ENCODE measurements at regions of chr17 and their contacts with region 1.

Region 1: DNA sequence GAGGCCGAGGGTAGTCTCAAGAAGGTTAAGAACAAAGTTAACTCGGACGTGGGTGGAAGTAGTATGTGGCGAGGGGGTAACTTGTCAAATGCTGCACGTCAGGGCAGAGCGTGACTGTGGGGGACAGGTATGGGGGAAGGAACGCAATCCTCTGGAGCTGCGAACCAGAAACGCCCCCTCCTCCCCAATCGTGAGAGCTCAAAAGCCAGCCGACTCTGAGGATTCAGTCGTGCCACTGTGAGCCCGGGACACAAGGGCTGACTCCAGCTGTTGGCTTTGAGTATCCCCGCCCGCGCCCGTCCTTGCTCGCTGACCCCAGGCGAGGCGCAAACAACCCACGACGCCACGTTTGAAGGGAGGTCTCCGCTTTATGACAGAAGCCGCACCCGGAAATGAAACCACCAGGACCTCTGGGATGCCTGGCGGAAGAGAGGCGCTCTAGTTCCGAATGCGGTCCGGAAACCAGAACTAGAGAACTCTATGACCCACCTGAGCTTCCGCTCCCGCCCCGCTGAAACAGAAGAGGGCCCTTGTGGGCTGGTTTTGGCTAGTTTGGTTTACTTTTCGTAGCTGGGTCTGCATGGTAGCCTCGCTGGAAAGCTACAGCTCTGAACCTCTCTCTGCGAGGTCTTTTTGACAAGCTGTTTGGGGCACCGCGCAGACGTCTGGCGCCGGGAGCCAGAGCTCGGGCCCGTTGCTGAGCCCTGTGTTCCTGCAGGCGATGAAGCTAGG is at the start of gene PEX12:
- DNase-seq: peak; percentile 61 to 73
- H3K4me3 ChIP-seq: peak within 1 kb of the TSS; percentile 67
- H3K27ac ChIP-seq: peak within 1 kb of the TSS; percentile 45; the same call in 1 of the 2 replicates
- H3K4me1 ChIP-seq: peaks cover 15% of the 10 kb centered on the region
- H3K27me3 ChIP-seq: no peaks in the 10 kb centered on the region
- CTCF ChIP-seq: no peak
- total RNA-seq, gene PEX12: 4.7 and 5.8 TPM in 2 replicates

Region 2: DNA sequence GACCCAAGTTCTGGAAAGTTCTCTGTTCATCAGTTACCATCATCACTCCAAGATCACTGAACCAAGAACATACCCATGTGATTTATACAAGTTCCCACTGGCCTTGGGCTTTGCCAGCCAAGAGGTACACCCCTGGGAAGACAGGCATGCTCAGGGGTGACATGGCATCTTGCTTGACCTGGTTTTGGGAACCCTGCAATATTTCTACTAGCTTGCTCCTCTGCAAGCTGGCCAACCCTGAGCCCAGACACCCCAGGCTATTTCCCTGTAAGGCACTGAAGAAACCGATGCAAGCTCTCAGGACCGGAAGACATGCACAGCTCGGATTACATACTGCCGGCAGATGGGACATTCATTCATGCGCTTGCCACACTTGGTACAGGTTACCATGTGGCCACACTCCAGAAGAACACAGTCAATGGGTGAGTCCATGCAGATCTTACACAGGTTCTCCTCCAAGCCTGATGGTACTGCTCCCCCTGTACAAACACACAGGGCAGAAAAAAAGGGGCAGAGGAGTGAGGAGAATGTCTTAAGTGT is 566.6 kb before region 1 on chr17:
- CTCF ChIA-PET with region 1: no interaction called
- POLR2A ChIA-PET with region 1: interaction called, 20 read pairs
- intact Hi-C with region 1: no loop called
- DNase-seq: no peak
- H3K4me3 ChIP-seq: no peak overlapping the region
- H3K27ac ChIP-seq: no peak overlapping the region
- H3K4me1 ChIP-seq: no peaks in the 10 kb centered on the region
- H3K27me3 ChIP-seq: no peaks in the 10 kb centered on the region
- CTCF ChIP-seq: no peak

Region 3: GRCh38 chr17:35423761-35424160 is 154.6 kb before region 1 on chr17:
- CTCF ChIA-PET with region 1: no interaction called
- POLR2A ChIA-PET with region 1: no interaction called
- intact Hi-C with region 1: no loop called
- DNase-seq: no peak
- H3K4me3 ChIP-seq: no peak overlapping the region
- H3K27ac ChIP-seq: no peak overlapping the region
- H3K4me1 ChIP-seq: no peaks in the 10 kb centered on the region
- H3K27me3 ChIP-seq: no peaks in the 10 kb centered on the region
- CTCF ChIP-seq: no peak

Region 4: GRCh38 chr17:35726127-35726952 is 148.0 kb after region 1 on chr17:
- CTCF ChIA-PET with region 1: no interaction called
- POLR2A ChIA-PET with region 1: interaction called, 12 read pairs
- intact Hi-C with region 1: no loop called
- DNase-seq: peak; percentile 74 to 78
- H3K4me3 ChIP-seq: no peak overlapping the region
- H3K27ac ChIP-seq: no peak overlapping the region
- H3K4me1 ChIP-seq: peaks cover 14% of the 10 kb centered on the region
- H3K27me3 ChIP-seq: no peaks in the 10 kb centered on the region
- CTCF ChIP-seq: no peak

Region 5: GRCh38 chr17:35799942-35800341 is 221.6 kb after region 1 on chr17:
- CTCF ChIA-PET with region 1: no interaction called
- POLR2A ChIA-PET with region 1: interaction called, 13 read pairs
- intact Hi-C with region 1: no loop called
- DNase-seq: peak in 1 of 2 experiments; percentile 70
- H3K4me3 ChIP-seq: no peak overlapping the region
- H3K27ac ChIP-seq: no peak overlapping the region
- H3K4me1 ChIP-seq: peaks cover 2% of the 10 kb centered on the region; the same call in 1 of the 2 replicates
- H3K27me3 ChIP-seq: peaks cover 27% of the 10 kb centered on the region
- CTCF ChIP-seq: no peak

Measured in PC-9 (cell line).